GM10248 (cell line): ENCODE measurements at regions of chr3 and their contacts with region 1.

Region 1: GRCh38 chr3:15291589-15292541 is 40.5 kb downstream of the SH3BP5 start:
- DNase-seq: peak; percentile 69
- CTCF ChIP-seq: no peak

Region 2: GRCh38 chr3:15307580-15307979 is 15.7 kb after region 1 on chr3:
- CTCF ChIA-PET with region 1: interaction called, 12 read pairs
- POLR2A ChIA-PET with region 1: no interaction called
- DNase-seq: no peak
- CTCF ChIP-seq: no peak

Region 3: DNA sequence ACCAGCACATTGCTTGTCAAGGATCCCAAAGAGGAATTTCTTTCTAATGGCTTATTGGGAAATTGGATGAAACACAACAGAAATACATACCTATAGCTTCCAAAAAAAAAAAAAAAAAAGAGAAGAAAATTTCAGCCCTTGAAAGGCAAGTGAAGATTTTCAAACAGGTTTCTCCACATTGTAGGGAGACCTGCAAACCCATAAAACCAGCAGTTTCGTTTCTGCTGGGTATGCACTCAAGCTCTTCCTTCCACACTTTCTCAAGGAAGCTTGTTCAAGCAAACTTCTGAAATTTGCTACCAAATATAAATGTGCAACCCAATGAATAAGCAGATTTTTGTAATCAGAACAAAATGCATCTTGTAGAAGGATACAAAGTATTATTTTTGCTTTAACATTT is 56.4 kb after region 1 on chr3:
- CTCF ChIA-PET with region 1: no interaction called
- POLR2A ChIA-PET with region 1: no interaction called
- DNase-seq: no peak
- CTCF ChIP-seq: no peak

Region 4: DNA sequence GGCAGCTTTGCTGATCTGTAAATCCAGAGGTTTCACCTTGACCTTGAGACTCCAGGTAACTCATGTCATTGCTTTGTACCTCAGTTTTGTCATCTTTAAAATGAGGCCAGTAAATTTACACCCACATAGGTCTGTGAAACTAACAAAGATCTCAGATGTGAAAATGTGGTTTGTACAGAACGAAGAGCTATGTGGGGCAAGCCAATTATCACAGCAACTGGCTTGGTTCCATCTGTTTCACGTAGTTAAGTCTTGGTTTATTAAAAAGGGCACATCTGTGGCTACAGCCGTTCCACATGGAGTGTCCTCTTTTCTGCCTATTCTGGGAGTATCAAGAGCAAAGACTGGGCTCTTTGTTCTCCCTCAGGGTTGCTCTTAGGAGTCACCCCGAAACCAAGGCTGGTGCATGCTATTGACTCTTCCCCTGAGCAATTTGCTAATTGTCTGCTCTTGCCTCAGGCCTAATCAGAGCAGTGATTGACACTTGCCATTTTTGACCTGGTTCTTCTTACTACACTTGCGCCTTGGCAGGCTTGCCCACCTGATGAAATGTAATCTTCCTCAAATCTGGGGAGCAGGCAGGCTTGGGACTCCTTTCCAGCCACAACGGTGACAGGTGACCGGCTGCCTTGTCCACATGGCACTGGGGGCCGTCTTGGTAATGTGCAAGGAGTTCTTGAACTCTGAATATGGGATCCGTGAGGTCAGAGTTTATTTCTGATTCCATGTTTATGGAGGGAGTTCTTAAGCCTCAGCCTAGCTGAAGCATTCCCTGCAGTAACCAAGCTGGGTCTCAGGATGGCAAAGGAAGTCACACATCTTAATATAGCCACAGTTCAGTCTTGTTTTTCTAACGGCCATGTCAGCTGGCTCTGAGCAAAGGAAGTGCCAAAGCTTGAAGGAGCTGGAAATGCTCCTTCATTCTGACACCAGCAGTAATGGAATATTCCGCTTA is 175.6 kb after region 1 on chr3:
- CTCF ChIA-PET with region 1: no interaction called
- POLR2A ChIA-PET with region 1: no interaction called
- DNase-seq: no peak
- CTCF ChIP-seq: no peak